GM10248 (cell line): ENCODE measurements at regions of chr3 and their contacts with region 1.

Region 1: DNA sequence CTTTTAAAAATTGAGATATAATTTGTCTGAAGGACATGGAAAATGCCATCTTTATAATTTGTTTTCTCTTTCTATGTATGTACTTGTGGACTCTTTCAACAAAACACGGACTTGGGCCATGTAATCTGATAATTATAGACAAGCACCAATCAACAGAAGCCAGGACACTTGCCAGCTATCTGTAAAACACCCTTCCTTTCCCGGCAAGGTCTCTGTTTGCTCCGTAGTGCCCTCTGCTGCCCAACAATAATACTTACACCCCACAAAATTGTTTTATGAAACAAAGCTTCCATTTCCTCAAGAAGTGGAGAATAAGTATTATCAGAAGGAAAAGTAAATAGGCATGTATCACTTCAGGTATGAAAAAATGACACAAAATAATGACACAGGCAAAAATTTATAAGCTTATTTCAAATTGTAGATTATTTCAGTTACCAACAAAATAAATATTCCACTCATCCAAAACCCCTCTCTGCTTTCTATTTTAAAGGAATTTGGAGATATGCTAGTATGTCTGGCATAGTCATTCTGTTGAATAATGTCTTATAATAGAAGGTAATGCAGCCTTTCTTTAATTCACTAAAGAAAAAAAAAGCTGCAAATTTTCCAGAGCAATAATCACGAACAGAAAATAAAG is 32.8 kb downstream of the MYH15 start:
- DNase-seq: peak; percentile 36
- CTCF ChIP-seq: peak; percentile 75

Region 2: DNA sequence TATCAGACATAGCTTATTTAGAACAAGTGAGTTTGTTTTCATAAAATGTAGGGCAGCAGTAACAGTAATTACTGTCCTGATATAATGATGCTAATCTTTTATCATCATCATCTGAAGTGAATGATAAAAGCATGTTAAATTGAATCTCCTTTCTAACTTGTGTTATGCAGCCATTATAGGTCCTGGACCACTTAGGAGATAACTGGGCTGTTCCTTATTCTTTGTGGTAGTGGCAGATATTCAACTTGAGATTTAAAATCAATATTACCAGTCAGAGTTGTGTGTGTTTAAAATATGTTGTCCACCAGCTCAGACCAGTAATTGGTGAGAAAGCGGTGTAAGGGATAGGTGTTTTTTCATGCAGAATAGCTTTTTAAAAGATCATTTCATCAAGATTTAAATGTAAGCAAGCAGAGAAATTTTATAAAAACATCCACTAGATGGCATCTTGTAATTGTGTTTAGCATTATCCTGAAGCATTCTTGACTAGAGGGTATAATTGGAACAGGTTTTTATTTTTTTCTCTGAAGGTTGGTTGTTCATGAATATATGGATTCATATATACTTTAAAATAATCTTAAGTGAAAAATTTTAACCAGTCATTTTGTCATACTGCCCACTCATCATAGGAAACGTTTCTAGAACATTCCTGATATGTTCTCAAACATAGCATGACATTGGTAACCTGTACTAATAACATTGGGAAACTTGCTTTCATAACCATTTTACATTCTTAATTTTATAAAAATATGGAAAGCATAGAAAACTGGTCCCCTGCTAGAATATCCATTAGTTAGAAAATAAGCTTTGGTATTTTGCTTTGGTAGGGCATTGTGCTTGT is 800.9 kb before region 1 on chr3:
- CTCF ChIA-PET with region 1: interaction called, 10 read pairs
- POLR2A ChIA-PET with region 1: no interaction called
- DNase-seq: no peak
- CTCF ChIP-seq: peak; percentile 24

Region 3: GRCh38 chr3:108153451-108153981 is 324.1 kb before region 1 on chr3:
- CTCF ChIA-PET with region 1: interaction called, 20 read pairs
- POLR2A ChIA-PET with region 1: no interaction called
- DNase-seq: peak; percentile 46
- CTCF ChIP-seq: peak; percentile 25

Region 4: DNA sequence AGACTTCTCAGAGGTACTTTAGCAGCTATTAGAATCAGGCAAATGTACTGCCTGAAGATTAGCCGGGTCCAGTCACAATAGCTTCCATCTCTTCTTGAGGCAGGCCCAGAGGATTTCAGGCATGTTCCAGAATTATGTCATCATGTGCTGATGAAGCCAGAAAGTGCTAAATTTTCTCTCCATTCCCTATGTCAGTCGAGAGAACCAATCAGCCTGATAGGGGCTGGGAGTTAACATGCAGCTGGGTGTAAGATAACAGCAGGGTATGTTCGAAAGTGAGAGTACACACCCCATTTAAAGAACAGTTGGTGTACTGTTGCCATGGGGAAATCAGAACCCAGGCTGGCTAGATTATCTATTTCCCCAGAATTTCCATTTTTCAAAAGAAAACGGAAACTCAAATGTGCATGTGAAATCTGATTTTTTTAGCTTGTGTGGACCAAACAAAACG is 15.9 kb before region 1 on chr3:
- CTCF ChIA-PET with region 1: interaction called, 36 read pairs
- POLR2A ChIA-PET with region 1: no interaction called
- DNase-seq: no peak
- CTCF ChIP-seq: no peak

Region 5: GRCh38 chr3:108500728-108501127 is 23.1 kb after region 1 on chr3:
- CTCF ChIA-PET with region 1: interaction called, 14 read pairs
- POLR2A ChIA-PET with region 1: no interaction called
- DNase-seq: no peak
- CTCF ChIP-seq: no peak

Region 6: DNA sequence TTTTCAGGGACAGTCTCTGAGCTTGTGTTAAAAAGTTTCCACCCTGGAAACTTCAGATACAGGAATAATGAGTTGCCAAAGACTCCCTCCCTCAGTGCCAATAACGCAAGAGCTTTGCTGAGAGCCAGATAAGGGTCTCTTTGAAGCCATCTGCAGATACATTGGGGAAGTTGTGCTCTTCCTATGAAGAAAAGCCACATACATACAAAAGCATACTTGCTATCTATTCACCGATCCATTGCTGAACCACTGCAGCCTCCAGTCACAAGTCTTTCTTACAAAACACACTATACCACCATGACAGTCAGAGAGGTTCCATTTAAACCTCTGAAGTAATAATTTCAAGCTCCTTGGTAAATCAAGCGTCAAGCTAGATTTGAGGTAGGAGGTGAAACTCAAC is 289.6 kb after region 1 on chr3:
- CTCF ChIA-PET with region 1: no interaction called
- POLR2A ChIA-PET with region 1: no interaction called
- DNase-seq: no peak
- CTCF ChIP-seq: no peak